A549 (cell line): ENCODE measurements at regions of chr2 and their contacts with region 1.

Region 1: DNA sequence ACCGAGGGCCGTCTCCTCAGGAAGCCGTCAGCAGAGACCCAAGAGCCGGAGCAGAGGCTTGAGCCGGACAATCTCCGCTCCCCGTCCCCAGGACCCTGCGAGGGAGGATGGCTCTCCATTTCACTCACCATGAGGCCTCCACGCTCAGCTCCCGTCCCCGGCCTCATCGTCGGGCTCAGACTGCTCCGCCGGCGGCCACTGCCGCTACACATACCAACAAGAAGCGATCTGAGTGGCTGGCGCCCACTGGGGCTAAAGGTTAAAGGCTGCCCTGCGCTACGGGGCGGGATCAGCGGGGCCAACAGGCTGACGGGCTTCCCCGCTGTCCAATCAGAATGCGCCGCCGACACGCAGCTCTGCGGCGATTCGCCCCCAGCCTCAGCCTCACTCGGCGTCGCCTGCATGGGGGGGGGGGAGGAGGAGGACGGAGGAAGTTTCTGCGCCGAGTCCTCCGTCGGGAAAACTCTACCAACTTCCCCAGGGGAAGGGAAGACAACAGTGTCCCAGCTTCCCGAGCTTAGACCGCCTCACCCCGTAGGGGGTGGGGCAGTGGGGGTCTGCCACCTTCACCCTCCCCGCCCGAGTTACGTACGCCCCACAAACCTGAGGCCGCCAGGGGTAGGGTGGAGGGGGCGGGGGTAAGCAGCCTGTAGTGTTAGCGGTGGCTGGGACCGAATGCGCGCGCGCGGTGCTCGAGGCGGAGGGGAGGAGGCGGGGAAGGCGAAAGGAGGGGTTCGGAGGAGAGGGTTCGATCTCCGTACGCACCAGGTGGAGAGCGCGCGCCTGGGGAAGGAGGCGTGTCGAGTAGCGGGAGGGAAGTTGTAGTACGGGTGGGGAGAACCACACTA is at the start of gene PRPF40A:
- DNase-seq: peak; percentile 80 to 98
- ATAC-seq: peak; percentile 78 to 84
- H3K4me3 ChIP-seq: peak within 1 kb of the TSS; percentile 75
- H3K27ac ChIP-seq: peak within 1 kb of the TSS; percentile 97
- H3K4me1 ChIP-seq: peaks cover 39% of the 10 kb centered on the region
- CTCF ChIP-seq: no peak
- EP300 ChIP-seq: no peak
- POLR2A ChIP-seq: peak; percentile 75
- RAD21 ChIP-seq: no peak
- polyA plus RNA-seq, gene PRPF40A: 184 and 186 TPM in 2 replicates

Region 2: DNA sequence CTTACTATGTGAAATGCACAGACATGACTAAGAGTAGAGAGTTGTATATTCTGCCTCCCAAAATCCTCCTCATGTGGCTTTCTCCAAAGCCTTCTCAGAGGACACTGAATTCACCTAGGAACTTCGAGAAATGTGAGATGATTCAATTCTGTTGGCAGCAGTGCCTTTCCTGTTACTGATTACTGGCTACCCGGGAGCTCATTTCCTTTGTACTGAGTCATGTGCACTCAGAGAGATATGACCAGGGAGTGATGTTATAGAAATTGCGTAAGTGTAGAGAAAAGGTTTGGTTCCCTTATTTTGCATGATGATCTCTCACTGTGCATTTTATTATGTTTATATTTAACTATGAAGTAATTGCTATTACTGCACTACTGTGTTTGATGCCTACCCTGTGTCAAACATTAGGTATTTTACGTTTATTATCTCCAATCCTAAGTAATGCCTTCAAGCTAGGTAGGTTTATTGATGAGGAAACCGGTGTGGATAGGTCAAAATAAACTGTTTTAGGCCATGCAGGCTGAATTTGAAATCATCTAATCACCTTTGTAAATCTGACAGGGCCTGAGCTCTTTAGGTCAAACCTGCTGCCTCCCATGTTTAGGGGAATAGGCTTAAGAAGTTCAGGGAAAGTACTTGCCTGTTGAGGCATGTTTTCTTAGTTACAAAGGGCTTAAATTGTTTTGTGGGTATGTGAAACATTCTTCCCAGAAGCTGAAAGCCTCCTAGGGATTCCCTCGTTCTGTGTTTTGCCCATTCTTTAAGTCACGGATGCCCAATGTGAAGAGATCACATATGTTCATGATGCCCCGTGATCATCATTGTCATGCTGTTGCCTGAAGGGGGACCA is 295.7 kb before region 1 on chr2:
- CTCF ChIA-PET with region 1: no interaction called
- POLR2A ChIA-PET with region 1: no interaction called
- DNase-seq: peak; percentile 72 to 92
- ATAC-seq: peak; percentile 94 to 98
- H3K4me3 ChIP-seq: no peak overlapping the region; the same call in 2 of the 3 replicates
- H3K27ac ChIP-seq: peak overlapping the region; percentile 90 to 91
- H3K4me1 ChIP-seq: peaks cover 74% of the 10 kb centered on the region
- CTCF ChIP-seq: no peak
- EP300 ChIP-seq: peak; percentile 83 to 91; a peak in 4 of 5 replicates
- POLR2A ChIP-seq: no peak
- RAD21 ChIP-seq: peak; percentile 34 to 65

Region 3: DNA sequence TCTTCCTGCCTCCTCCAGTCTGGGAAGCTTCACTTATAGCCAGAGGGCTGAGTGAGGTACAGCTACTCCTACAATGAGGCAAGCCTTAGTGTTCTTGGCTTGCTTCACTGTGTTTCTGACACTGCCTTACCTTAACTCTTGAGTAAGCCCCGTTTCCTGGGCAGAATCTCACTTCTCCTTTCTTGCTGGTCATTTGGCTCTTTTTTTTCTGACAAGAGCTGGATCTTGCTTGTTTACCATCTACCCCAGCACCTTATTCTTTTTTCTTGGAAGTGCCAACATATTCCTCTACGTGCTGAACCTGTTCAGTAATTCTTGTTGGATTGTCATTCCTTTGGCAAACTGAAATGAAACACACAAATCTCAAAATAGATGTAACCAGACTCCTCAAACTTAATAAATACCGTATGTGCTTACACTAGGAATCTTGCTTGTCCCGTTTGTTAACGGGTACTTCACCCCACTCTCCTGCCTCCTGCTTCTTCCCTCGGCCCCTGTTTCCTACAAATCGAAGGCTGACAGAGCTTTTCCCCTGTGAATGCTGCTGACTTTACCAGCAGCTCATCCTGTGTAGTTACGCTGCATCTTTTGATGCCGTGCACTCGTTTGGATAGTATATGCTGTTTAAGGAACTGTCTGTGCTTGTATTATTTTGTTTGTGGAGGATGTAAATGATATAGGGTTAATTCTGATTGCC is 250.3 kb before region 1 on chr2:
- CTCF ChIA-PET with region 1: no interaction called
- POLR2A ChIA-PET with region 1: no interaction called
- DNase-seq: no peak
- ATAC-seq: peak; percentile 40 to 59; a peak in 3 of 6 replicates
- H3K4me3 ChIP-seq: no peak overlapping the region
- H3K27ac ChIP-seq: peak overlapping the region; percentile 4 to 67; a peak in 4 of 6 replicates
- H3K4me1 ChIP-seq: peaks cover 72% of the 10 kb centered on the region
- CTCF ChIP-seq: no peak
- EP300 ChIP-seq: no peak
- POLR2A ChIP-seq: no peak
- RAD21 ChIP-seq: no peak

Region 4: GRCh38 chr2:152706477-152707020 is 10.9 kb before region 1 on chr2:
- CTCF ChIA-PET with region 1: interaction called, 14 read pairs
- POLR2A ChIA-PET with region 1: interaction called, 7 read pairs
- DNase-seq: no peak
- ATAC-seq: no peak
- H3K4me3 ChIP-seq: no peak overlapping the region
- H3K27ac ChIP-seq: no peak overlapping the region
- H3K4me1 ChIP-seq: no peaks in the 10 kb centered on the region
- CTCF ChIP-seq: no peak
- EP300 ChIP-seq: no peak
- POLR2A ChIP-seq: no peak
- RAD21 ChIP-seq: no peak

Region 5: DNA sequence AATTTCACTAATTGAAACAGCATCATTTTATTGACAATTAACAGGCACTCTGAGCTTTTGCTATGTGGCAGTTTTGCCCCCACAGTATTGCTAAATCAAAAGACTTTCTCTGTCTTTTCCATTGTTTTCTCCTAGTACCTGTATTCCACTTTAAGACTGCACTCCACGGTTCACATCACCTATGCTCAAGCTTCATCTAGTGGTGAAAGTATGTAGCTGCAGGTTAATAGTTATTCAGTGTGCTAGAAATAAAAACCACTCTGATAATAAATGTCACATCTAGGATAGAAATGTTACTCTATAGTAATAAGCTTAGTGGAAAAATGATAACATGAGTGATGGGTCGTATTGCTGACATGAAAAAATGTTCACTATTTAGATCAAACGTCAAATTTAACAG is 25.6 kb after region 1 on chr2:
- CTCF ChIA-PET with region 1: interaction called, 3 read pairs
- POLR2A ChIA-PET with region 1: interaction called, 13 read pairs
- DNase-seq: peak; percentile 19 to 34
- ATAC-seq: peak; percentile 89 to 90
- H3K4me3 ChIP-seq: no peak overlapping the region
- H3K27ac ChIP-seq: no peak overlapping the region
- H3K4me1 ChIP-seq: no peaks in the 10 kb centered on the region
- CTCF ChIP-seq: peak; percentile 42
- EP300 ChIP-seq: no peak
- POLR2A ChIP-seq: no peak
- RAD21 ChIP-seq: peak; percentile 26 to 48; a peak in 3 of 5 replicates